Right lobe of liver (tissue), 6 donors: ENCODE measurements at regions of chr5 and their contacts with region 1.

Region 1: GRCh38 chr5:139787568-139788293 is 7.9 kb upstream of the PSD2 start:
- DNase-seq: peak; percentile 84 to 86 (median 84)
- ATAC-seq: peak; percentile 94 to 97 (median 95)
- H3K4me3 ChIP-seq: peak overlapping the region; percentile 53 to 55 (median 54)
- H3K27ac ChIP-seq: no peak overlapping the region
- H3K4me1 ChIP-seq: no peaks in the 10 kb centered on the region
- H3K27me3 ChIP-seq: no peaks in the 10 kb centered on the region
- CTCF ChIP-seq: peak; percentile 85 to 98 (median 94)
- POLR2A ChIP-seq: no peak

Region 2: DNA sequence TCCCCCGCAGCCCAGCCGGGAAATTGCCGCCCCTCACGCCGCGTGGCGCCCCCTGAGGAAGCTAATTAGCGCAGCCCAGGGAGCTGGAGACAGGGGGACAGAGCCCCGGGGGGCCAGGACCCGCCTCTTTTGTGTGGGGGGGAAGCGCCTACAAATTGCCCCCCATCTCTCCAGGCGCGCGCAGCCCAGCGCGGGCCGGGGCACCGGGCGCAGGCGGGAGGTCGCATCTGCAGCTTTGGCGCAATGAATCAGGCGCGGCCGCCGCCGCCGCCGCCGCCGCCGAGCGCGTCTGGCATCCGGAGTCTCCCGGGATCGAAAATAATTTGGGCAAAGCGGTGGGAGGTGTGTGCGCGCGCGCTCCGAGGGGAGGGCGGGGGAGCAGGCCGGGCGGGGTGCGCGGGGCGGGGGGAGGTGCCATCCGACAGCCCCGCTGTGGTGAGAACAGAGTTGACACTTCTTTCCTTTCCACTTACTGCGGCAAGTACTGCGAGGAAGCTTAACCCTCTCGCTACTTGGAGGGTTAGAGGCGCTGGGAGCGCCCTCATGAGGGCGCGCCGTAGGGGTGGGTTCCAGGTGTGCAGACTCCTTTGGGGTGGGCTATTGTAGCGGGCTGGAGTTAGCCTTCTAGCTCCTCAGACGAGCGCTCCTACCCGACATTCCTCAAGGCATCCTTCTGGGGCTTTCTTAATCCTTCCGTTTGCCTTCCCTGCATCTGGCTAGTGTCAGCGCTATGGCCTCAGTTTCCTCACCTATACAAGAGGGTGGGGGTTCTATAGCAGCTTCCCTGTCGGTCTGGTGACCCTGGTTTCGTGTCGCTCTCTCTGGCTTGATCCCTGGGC is 76.4 kb before region 1 on chr5:
- intact Hi-C with region 1: no loop called
- DNase-seq: peak in 1 of 3 donors; percentile 35
- ATAC-seq: peak in 3 of 4 donors; percentile 3 to 33 (median 9)
- H3K4me3 ChIP-seq: peak overlapping the region; percentile 29 to 52 (median 31)
- H3K27ac ChIP-seq: no peak overlapping the region
- H3K4me1 ChIP-seq: peaks cover 0 to 11% (median under 1%) of the 10 kb centered on the region in 4 donors
- H3K27me3 ChIP-seq: peaks cover 0 to 5% of the 10 kb centered on the region in 2 donors
- CTCF ChIP-seq: no peak
- POLR2A ChIP-seq: no peak

Region 3: DNA sequence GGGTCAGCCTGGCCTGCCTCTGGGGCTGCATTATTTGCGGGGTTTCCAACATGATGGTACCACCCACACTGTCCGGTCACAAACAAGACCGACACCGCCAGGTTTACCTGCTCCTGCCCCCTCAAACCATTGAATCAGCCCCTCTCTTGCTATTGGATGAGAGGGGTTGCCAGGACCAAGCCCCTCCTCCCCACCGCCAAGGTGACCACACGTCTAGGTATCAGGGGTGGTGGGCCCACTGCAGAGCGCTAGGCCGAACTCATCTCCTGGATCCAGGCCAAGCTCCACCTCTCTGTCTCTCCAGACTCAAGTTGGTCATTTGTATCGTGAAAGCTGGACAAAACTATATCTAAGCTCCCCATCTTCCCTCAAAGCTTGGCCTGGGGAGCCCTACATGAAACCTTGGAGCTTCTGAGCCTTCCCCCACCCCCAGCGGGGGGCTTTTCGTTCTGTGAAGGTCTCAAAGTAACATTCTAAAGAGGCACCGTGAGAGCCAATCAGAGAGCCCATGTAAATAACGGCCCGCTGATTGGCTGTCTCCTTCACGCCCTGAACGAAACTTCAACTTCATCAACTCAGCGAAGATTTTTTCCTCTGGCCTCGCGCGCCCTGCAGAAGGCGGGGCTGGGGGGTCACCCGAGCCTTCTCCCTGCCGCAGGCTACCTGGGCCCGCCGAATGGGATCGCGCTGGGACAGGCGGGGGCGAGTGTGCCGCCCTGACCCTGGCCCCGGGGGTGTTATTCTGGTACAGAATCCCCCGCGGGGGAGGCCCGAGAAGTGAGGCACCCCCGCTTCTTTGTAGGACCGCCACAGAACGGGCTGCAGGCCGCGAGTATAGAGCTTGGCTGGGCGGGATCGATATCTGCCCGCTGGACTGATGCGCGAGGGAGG is 41.7 kb before region 1 on chr5:
- intact Hi-C with region 1: no loop called
- DNase-seq: peak in 2 of 3 donors; percentile 51 to 55
- ATAC-seq: peak; percentile 40 to 59 (median 48)
- H3K4me3 ChIP-seq: peak overlapping the region; percentile 6 to 33 (median 23)
- H3K27ac ChIP-seq: no peak overlapping the region
- H3K4me1 ChIP-seq: peaks cover 0 to 19% (median 8%) of the 10 kb centered on the region in 4 donors
- H3K27me3 ChIP-seq: no peaks in the 10 kb centered on the region
- CTCF ChIP-seq: no peak
- POLR2A ChIP-seq: peak; percentile 15

Region 4: DNA sequence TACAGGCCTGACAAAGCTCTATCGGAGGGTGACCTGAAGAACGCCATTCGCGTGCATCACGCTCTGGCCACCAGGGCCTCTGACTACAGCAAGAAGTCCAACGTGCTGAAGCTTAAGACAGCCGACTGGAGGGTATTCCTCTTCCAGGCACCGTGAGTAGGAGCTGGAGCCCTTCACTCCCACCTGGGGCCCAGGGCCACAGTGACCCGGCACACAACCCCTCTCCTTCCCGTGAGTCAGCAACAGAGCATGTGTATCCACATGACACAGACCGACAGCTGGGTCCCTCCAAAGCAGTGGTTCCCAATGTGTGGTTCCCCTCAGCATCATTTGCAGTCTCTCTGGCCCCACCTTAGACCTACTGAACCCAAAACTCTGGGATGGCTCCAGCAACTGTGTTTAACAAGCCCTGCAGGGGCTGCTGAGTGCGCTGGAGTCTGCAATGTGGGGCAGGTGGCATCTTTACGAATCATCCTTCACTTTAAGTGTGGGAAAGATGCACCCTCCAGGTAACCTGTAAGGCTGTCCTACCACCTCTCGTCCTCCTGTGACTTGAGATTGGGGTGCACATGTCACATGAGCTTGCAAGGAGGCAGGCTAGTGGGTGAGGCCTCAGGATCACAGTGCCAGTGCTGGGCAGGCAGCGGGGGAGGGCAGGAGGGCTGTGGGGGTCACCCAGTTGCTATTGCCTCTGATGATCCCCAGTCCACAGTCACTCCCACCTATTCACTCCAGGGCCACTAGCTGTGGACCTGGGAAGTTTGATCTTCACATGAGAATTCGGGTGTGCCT is 50.1 kb after region 1 on chr5:
- intact Hi-C with region 1: loop called in 1 of 2 experiments (anchors 5 kb)
- DNase-seq: peak in 1 of 3 donors; percentile 29
- ATAC-seq: no peak
- H3K4me3 ChIP-seq: no peak overlapping the region
- H3K27ac ChIP-seq: no peak overlapping the region
- H3K4me1 ChIP-seq: no peaks in the 10 kb centered on the region
- H3K27me3 ChIP-seq: no peaks in the 10 kb centered on the region
- CTCF ChIP-seq: no peak
- POLR2A ChIP-seq: no peak

Region 5: DNA sequence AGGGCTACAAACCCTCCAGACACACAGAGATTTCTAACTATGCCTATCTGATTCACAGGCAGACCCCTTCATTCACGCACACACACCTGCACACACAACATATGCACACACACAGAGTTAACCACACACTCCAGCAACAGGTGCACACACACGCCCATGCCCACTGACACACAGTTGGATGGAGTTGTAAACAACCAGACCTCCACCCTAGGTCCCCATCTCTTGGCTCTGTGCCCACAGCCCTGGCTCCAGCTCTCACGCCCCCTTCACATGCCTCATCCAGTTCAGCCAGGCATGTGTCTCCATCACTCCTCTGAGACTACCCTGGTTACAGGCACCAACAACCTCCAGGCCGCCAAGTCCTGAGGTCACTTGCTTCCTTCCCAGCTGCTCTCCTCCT is 69.0 kb after region 1 on chr5:
- intact Hi-C with region 1: loop called (anchors 5 to 10 kb)
- DNase-seq: no peak
- ATAC-seq: no peak
- H3K4me3 ChIP-seq: no peak overlapping the region
- H3K27ac ChIP-seq: no peak overlapping the region
- H3K4me1 ChIP-seq: no peaks in the 10 kb centered on the region
- H3K27me3 ChIP-seq: no peaks in the 10 kb centered on the region
- CTCF ChIP-seq: no peak
- POLR2A ChIP-seq: no peak

Region 6: DNA sequence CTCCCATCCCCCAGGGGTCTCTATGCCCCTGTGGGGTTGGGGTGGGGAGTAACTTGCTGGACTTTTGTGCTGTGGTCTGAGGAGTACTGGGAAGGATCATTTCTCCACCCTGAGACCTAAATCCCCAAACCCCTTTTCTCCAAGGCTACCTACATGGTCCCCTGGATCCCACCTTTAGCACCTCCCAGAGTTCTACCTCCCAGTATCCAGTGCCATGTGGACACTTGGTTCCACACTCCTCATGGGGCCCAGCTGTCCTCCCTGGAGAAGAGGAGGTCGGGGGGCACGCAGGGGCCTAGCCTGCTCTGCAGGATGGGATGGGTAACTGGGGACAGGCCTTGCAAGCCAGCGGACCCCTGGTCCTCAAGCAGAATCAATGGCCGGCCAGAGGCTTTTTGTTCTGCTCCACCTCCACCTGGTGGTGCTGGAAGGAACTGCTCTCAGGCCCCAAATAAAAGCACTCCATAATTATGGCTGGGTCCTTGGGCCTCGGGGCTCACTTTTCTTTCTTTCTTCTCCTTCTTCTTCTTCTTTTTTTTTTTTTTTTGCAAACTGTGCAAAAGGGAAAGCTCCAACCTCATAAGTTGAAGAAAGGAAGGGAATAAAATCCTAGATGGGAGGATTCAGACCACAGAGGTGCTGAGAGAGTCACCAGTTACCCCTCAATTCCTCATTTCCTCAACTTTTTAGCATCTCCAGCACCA is 76.3 kb after region 1 on chr5:
- intact Hi-C with region 1: loop called (anchors 5 to 10 kb)
- DNase-seq: peak; percentile 56 to 69 (median 66)
- ATAC-seq: peak; percentile 71 to 88 (median 82)
- H3K4me3 ChIP-seq: no peak overlapping the region
- H3K27ac ChIP-seq: no peak overlapping the region
- H3K4me1 ChIP-seq: peaks cover 0 to 9% (median 2%) of the 10 kb centered on the region in 4 donors
- H3K27me3 ChIP-seq: no peaks in the 10 kb centered on the region
- CTCF ChIP-seq: peak; percentile 70 to 86 (median 84)
- POLR2A ChIP-seq: no peak

Region 7: DNA sequence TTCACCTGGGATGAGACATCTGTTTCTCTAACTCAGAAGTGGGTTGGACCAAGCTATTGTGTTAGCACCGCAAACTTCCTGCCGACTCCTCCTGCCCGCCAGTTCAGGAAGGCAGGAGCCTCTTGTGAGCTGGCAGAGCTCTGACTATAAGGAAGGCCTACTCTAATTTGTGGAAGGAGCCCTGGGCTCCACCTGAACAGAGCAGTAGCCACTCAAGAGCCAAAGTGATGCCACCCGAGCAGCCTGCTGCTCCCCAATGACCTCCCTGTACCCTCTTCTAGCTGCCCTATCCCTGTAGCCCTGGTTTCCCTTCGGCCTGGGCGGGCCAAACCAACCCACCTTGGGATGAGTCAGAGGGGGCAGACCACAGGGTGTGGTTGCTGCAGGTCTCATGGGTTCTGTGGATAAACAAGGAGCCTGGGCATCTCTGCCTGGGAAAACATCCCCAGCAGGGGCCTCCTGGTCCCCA is 89.4 kb after region 1 on chr5:
- intact Hi-C with region 1: no loop called
- DNase-seq: no peak
- ATAC-seq: no peak
- H3K4me3 ChIP-seq: no peak overlapping the region
- H3K27ac ChIP-seq: no peak overlapping the region
- H3K4me1 ChIP-seq: no peaks in the 10 kb centered on the region
- H3K27me3 ChIP-seq: no peaks in the 10 kb centered on the region
- CTCF ChIP-seq: no peak
- POLR2A ChIP-seq: no peak

Region 8: GRCh38 chr5:139968547-139969261 is 181.0 kb after region 1 on chr5:
- intact Hi-C with region 1: loop called (anchors 5 kb)
- DNase-seq: peak; percentile 89
- ATAC-seq: peak; percentile 100
- H3K4me3 ChIP-seq: no peak overlapping the region
- H3K27ac ChIP-seq: no peak overlapping the region
- H3K4me1 ChIP-seq: no peaks in the 10 kb centered on the region
- H3K27me3 ChIP-seq: no peaks in the 10 kb centered on the region
- CTCF ChIP-seq: peak; percentile 100
- POLR2A ChIP-seq: no peak